IMR-90 (cell line): ENCODE measurements at regions of chr7 and their contacts with region 1.

Region 1: GRCh38 chr7:35985126-35985754 is 167.8 kb upstream of the EEPD1 start:
- DNase-seq: peak; percentile 70
- ATAC-seq: peak; percentile 99
- H3K4me3 ChIP-seq: no peak overlapping the region
- H3K27ac ChIP-seq: no peak overlapping the region
- H3K4me1 ChIP-seq: peaks cover 2% of the 10 kb centered on the region; the same call in 1 of the 2 replicates
- H3K27me3 ChIP-seq: peaks cover 11% of the 10 kb centered on the region
- CTCF ChIP-seq: peak; percentile 96
- POLR2A ChIP-seq: peak; percentile 60; the same call in 1 of the 2 replicates
- RAD21 ChIP-seq: peak; percentile 100

Region 2: DNA sequence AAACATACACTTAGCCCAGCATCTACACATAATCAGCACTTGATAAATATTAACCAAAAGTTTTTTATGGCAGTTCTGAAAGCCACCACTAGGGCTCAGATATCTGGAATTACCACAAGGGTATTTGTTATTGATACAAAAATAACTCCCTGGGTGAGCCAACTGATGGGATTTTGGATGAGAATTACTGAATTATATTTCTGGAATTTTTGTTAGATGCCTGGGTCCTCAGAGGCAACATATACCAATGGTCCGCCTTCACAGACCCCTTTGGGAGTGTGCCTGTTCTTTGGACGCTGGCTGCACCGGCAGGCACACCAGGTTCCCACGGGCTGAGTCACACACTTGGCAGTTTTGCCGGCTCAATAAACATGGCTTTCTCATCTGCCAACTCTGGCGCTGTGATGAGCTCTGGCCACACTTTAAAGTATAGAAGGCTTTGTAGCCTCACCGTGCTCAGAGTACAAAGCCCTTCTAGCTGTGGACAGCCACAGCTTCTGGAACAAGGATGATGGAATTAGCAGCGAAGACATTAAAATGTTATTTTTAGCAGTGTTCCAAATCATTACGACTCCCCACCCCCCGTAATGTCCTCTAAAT is 143.3 kb after region 1 on chr7:
- CTCF ChIA-PET with region 1: no interaction called
- POLR2A ChIA-PET with region 1: no interaction called
- dilution Hi-C with region 1: no loop called
- in situ Hi-C with region 1: no loop called
- intact Hi-C with region 1: loop called (anchors 1 kb)
- DNase-seq: peak; percentile 91
- ATAC-seq: peak; percentile 89
- H3K4me3 ChIP-seq: no peak overlapping the region
- H3K27ac ChIP-seq: 0 out of 2 replicates have a peak overlapping the region, but pooled peaks have one; percentile 19
- H3K4me1 ChIP-seq: peaks cover 4% of the 10 kb centered on the region; the same call in 1 of the 2 replicates
- H3K27me3 ChIP-seq: no peaks in the 10 kb centered on the region
- CTCF ChIP-seq: peak; percentile 66
- POLR2A ChIP-seq: no peak
- RAD21 ChIP-seq: no peak

Region 3: DNA sequence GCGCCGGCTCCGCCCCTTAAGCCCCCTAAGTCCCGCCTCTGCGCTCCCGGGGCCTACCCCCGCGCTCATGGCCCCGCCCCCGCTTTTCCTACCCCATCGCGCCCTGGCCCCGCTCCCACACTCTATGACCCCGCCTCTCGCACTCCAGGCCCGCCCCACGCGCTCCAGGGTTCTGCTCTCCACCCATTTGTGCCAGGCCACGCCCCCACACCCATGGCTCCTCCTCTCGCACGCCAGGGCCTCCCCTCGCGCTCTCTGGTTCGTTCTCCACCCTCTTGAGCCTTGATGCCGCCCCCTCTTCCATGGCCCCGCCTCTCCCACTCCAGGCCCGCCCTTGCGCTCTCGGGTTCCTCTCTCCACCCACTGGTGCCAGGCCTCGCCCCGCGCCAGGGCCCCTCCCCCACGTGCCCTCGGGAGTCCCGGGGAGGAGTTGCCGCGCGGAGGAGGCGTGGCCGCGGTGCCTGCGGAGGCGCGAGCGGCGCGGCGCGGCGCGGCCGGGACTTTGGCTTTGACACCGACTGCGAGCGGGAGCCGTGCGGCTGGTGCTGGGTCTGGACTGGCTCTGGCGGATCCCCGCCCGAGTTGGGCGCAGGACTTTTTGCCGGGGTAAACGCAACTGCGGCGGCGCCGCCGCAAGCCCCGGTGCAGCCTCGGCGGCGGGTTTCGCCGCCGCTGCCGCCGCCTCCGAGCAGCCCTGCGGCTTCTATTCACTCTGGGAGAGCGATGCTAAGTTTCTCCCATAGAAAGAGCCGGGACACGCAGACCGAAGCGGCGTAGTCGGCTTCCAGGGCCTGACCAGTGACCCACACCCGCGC is 167.7 kb after region 1 on chr7 and contains the start of gene EEPD1:
- CTCF ChIA-PET with region 1: no interaction called
- POLR2A ChIA-PET with region 1: no interaction called
- dilution Hi-C with region 1: no loop called
- in situ Hi-C with region 1: no loop called
- intact Hi-C with region 1: loop called (anchors 10 kb)
- DNase-seq: peak; percentile 99
- ATAC-seq: peak; percentile 96
- H3K4me3 ChIP-seq: peak within 1 kb of the TSS; percentile 60
- H3K27ac ChIP-seq: peak within 1 kb of the TSS; percentile 49
- H3K4me1 ChIP-seq: peaks cover 16% of the 10 kb centered on the region
- H3K27me3 ChIP-seq: no peaks in the 10 kb centered on the region
- CTCF ChIP-seq: no peak
- POLR2A ChIP-seq: no peak
- RAD21 ChIP-seq: no peak
- total RNA-seq, gene EEPD1: 7.3 and 8.1 TPM in 2 replicates

Region 4: DNA sequence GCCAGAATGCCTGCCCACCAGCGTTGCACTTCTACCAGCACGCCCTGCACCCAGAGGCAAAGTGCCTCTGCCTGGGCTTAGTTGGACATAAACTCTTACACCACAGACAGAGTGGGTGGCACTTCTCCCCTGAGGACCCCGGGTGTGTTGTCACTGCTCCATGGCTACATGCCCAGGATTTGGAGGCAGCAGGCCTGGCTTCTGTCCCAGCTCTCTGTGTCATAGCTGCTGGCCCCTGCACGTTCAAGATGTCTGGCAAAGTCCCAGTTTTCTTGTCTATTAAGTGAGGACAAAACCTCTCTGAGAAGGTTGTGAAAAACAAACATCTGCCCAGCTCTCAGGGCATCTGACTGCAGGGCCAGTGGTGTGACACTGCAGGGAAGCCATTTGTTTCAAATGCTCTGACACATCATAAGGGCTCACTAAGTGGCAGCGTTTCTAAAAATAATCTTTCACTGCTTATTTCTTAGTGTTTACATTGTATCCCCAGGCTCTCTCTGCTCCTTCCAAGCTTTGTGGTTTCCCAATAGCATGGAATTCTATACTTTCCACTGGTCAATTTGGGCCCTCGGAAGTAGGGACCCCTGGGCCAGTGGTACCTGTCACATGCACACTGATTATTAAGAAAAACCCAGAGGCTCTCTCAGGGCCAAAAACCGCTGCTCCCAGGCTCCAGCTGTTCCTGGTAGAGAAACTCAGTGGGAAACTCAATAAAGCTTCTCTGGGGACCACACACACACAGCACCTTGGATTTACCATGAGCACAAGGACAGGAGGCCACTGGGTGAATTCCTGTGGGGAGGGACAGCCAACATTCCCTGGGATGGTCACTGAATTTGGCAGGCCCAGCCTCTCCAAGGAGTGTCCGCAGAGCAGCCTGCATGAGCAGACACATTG is 318.2 kb after region 1 on chr7:
- CTCF ChIA-PET with region 1: no interaction called
- POLR2A ChIA-PET with region 1: no interaction called
- dilution Hi-C with region 1: loop called (anchors 25 kb)
- in situ Hi-C with region 1: no loop called
- intact Hi-C with region 1: no loop called
- DNase-seq: peak; percentile 95
- ATAC-seq: peak; percentile 86
- H3K4me3 ChIP-seq: no peak overlapping the region
- H3K27ac ChIP-seq: peak overlapping the region; percentile 4; the same call in 1 of the 2 replicates
- H3K4me1 ChIP-seq: peaks cover 23% of the 10 kb centered on the region
- H3K27me3 ChIP-seq: no peaks in the 10 kb centered on the region
- CTCF ChIP-seq: no peak
- POLR2A ChIP-seq: no peak
- RAD21 ChIP-seq: no peak

Region 5: DNA sequence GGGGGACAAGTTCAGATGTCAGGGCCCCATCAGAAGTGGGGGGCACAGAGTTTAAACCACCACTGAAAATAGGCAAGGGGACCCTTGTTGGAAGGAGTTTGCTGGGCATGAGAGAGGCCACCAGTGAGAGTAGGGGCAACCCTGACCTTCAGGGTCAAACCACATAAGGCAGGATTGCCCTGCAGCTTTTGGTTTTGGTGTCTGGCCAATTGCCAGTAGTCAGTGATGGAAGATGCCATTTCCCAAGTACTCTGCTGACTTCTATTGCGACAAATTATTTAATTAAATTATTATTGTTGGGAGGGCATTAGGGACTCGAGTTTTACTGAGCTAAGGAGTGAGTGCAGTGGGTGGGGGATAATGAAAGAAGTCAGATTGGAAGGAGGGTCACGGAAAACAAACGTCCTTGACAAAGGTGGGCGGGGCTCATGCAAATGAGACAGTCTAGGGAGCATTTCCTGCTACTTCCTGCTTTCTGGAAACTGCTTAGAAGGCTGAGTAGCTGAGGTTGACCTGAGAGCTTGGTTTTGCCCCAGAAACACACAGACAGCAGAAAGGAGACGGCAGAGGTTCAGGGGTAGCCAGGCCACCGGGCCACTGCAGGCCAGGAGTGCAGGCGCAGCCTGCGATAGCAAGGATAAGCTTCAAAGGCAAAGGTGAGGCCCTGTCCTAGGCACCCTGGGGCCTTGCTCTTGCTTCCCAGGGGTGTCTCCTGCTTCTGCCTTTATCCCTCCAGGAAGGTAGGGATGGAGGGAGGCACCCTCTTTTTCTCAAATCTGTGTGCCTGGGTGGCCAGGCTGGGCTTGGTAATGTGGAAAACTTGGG is 330.3 kb after region 1 on chr7:
- CTCF ChIA-PET with region 1: interaction called, 8 read pairs
- POLR2A ChIA-PET with region 1: no interaction called
- dilution Hi-C with region 1: loop called (anchors 25 kb)
- in situ Hi-C with region 1: loop called (anchors 5 kb)
- intact Hi-C with region 1: loop called (anchors 1 kb)
- DNase-seq: no peak
- ATAC-seq: no peak
- H3K4me3 ChIP-seq: no peak overlapping the region
- H3K27ac ChIP-seq: no peak overlapping the region
- H3K4me1 ChIP-seq: no peaks in the 10 kb centered on the region
- H3K27me3 ChIP-seq: peaks cover 9% of the 10 kb centered on the region
- CTCF ChIP-seq: no peak
- POLR2A ChIP-seq: no peak
- RAD21 ChIP-seq: no peak